Dorsolateral prefrontal cortex (tissue), 120 donors: ENCODE measurements at regions of chr17 and their contacts with region 1.

Region 1: GRCh38 chr17:3865176-3865575 is 19.1 kb upstream of the NCBP3 start:
- DNase-seq: peak in 1 of 10 donors; percentile 64
- H3K4me3 ChIP-seq: no peak overlapping the region
- H3K27ac ChIP-seq: peak overlapping the region in 23 of 59 donors; percentile 3 to 75 (median 44)
- H3K27me3 ChIP-seq: no peaks in the 10 kb centered on the region
- CTCF ChIP-seq: no peak

Region 2: DNA sequence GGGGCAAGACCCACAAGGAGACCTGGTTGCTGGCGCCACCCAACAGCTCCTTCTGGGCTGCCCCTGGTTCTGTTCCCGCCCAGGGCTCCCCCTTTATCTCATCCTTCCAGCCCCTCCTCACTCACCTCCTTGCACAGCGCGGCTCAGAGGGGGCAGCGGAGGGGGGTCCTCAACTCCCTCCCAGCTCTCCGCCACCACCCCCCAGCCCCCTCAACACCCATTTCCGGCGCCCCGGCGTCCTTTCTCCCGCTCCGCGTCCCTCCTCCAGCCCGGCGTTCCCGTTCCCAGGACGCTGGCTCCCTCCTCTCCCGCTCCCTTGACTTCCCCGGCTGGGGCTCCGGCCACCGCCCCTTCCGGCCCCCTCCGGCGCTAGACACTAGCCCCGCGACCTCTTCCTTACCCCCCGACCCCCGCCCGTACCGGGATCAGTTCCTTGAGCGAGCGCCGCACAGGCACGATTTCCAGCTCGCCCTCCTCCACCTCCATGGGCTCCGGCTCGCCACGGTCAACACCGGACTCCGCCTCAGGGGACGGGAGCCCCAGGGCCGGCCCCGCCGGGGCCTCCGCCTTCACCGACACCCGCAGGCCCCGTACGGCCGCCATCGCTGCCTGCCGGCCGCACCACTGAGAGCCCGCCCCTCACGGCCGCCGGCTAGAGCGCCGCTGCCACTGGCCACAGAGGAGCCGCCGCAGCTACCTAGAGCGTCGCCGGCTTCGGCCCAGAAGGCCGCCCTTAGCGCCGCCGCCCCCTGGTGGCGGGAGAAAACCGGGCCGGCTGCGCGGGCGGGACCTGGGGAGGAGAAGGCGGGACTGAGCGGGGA is 19.3 kb before region 1 on chr17 and contains the start of gene NCBP3:
- intact Hi-C with region 1: no loop called
- DNase-seq: peak; percentile 76 to 93 (median 88)
- H3K4me3 ChIP-seq: peak within 1 kb of the TSS; percentile 72 to 98 (median 92)
- H3K27ac ChIP-seq: peak within 1 kb of the TSS; percentile 54 to 97 (median 86)
- H3K27me3 ChIP-seq: no peaks in the 10 kb centered on the region
- CTCF ChIP-seq: peak; percentile 79 to 99 (median 94)
- total RNA-seq, gene NCBP3: 27.5 to 72.2 (median 39.5) TPM

Region 3: DNA sequence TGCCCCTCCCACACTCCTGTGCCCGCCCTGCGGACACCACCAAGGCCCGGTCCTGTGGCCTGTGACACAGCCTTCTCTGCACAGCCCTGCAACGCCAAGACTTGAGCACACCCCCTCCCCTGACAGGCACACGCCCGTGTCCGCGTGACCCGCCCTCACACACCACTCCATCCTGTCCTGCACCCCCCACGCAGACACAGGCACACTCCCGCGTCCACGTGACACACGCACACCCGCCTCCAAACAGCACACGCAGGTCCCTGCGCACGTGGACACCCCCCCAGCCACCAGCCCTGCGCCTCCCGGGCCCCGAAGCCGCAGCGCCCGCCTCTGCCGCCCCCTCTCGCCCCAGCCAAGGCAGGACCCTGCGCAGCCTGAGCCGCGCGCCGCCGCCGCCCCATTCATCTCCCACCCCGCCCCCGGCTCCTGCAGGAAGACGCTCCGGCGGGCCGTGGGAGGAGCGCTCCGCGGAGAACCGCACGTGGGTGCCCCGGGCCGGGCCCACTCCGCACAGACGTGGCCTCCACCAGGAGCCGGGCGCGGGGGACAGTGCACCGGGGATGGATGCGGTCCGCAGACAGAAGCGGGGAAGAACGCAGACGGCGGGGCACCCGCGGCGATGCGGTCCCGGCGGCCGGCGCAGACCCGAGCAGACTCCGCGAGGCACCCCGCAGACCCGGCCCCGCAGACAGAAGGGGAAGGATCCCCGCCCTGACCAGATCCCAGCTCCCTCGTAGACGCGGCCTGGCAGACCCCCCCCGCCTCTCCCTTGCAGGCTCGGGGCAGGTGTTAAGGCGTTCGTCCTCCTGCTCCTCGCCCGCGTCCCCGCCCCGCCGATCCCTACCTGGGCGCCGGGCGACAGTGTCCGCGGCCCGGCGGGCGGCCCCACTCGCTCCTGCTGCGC is 27.2 kb after region 1 on chr17:
- intact Hi-C with region 1: no loop called
- DNase-seq: peak; percentile 38 to 86 (median 78)
- H3K4me3 ChIP-seq: peak overlapping the region; percentile 37 to 88 (median 79)
- H3K27ac ChIP-seq: peak overlapping the region in 52 of 59 donors; percentile 19 to 92 (median 77)
- H3K27me3 ChIP-seq: no peaks in the 10 kb centered on the region
- CTCF ChIP-seq: peak in 1 of 56 donors; percentile 8

Region 4: DNA sequence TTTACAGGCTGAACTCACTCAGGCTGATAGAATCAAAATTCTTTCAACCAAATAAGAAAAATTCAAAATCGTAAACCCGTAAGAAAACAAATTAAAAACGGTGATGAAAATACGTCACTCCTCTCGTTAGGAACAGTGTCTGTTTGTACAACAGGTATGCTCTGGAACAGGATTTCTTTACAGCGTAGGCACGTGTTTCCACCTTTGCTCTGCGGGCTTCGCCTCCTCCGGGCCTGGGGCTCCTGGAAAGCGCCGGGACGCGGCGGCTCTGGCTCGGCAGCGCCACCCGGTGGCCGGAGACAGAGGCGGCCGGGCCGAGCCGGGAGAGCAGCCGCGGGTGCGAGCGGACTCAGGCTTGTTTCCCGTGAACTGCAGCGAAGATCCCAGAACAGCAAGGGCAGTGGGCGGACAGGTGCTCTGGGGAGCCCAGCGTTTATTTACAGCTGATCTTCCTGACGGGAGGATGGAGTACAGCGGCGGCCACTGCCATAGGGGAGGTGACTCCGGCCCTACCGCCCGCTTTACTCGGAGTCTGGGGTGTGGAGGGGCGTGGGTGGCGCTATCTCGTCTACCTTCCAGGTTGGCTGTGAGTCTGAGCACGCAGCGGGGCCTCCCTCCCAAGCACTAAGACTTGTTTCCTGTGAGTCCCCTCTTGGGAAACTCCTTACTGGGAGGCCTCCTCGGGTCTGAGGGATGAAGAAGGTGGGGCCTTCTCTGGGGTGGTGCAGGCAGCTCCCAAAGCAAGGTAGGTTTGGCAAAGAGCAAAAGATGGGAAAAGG is 139.5 kb after region 1 on chr17:
- intact Hi-C with region 1: loop called (anchors 10 kb)
- DNase-seq: peak in 2 of 10 donors; percentile 50 to 66
- H3K4me3 ChIP-seq: no peak overlapping the region
- H3K27ac ChIP-seq: peak overlapping the region in 15 of 59 donors; percentile 6 to 68 (median 29)
- H3K27me3 ChIP-seq: no peaks in the 10 kb centered on the region
- CTCF ChIP-seq: peak; percentile 62 to 96 (median 87)

Region 5: GRCh38 chr17:4074831-4075495 is 209.8 kb after region 1 on chr17:
- intact Hi-C with region 1: loop called in 1 of 2 experiments (anchors 10 kb)
- DNase-seq: no peak
- H3K4me3 ChIP-seq: no peak overlapping the region
- H3K27ac ChIP-seq: peak overlapping the region in 29 of 59 donors; percentile 5 to 76 (median 38)
- H3K27me3 ChIP-seq: no peaks in the 10 kb centered on the region
- CTCF ChIP-seq: peak in 55 of 56 donors; percentile 32 to 74 (median 64)